ENCODE measurements at regions of chr20 and their contacts with region 1.

Region 1: GRCh38 chr20:8082025-8082424 is 50.0 kb upstream of the PLCB1 start:
- DNase-seq: peak in 1 of 2 experiments; percentile 3
- H3K4me3 ChIP-seq: no peak overlapping the region
- H3K27ac ChIP-seq: no peak overlapping the region
- H3K4me1 ChIP-seq: no peaks in the 10 kb centered on the region
- H3K27me3 ChIP-seq: no peaks in the 10 kb centered on the region
- CTCF ChIP-seq: peak in 2 of 3 experiments; percentile 43 to 72; a peak in 3 of 4 replicates
- EP300 ChIP-seq: no peak
- POLR2A ChIP-seq: no peak
- RAD21 ChIP-seq: peak; percentile 12 to 32; a peak in 1 of 4 replicates

Region 2: GRCh38 chr20:8094415-8094818 is 12.4 kb after region 1 on chr20:
- CTCF ChIA-PET with region 1: interaction called, 12 read pairs
- POLR2A ChIA-PET with region 1: no interaction called
- DNase-seq: no peak
- H3K4me3 ChIP-seq: no peak overlapping the region
- H3K27ac ChIP-seq: no peak overlapping the region
- H3K4me1 ChIP-seq: no peaks in the 10 kb centered on the region
- H3K27me3 ChIP-seq: no peaks in the 10 kb centered on the region; a peak in 1 of 7 replicates
- CTCF ChIP-seq: no peak
- EP300 ChIP-seq: no peak
- POLR2A ChIP-seq: no peak
- RAD21 ChIP-seq: no peak

Region 3: DNA sequence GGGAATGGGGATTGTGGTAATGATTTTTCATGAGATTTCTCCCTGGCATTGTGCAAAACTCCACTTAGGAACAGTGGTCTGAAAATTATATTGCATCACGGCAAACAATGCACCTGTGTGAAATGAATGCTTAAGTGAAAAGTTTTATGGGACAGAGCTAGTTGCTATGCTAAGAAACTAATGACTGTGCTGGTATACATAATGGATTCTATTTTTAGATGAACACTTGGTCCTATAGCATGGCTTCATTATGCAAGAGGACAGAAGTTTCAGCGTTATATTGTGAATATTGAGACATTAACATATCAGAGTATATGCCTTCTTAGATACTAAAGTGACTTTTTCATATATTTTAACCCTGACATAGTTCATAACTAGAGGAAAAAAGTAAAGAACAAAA is 80.6 kb after region 1 on chr20:
- CTCF ChIA-PET with region 1: no interaction called
- POLR2A ChIA-PET with region 1: no interaction called
- DNase-seq: no peak
- H3K4me3 ChIP-seq: no peak overlapping the region
- H3K27ac ChIP-seq: no peak overlapping the region
- H3K4me1 ChIP-seq: no peaks in the 10 kb centered on the region
- H3K27me3 ChIP-seq: peaks cover 0 to 1% (median 0%) of the 10 kb centered on the region in 4 experiments; a peak in 1 of 7 replicates
- CTCF ChIP-seq: no peak
- EP300 ChIP-seq: no peak
- POLR2A ChIP-seq: no peak
- RAD21 ChIP-seq: no peak